Calu3 (cell line): ENCODE measurements at regions of chr20 and their contacts with region 1.

Region 1: GRCh38 chr20:36132802-36133211 is 21.7 kb upstream of the EPB41L1 start:
- DNase-seq: no peak
- H3K4me3 Mint-ChIP-seq: no peak overlapping the region
- H3K27ac Mint-ChIP-seq: no peak overlapping the region
- H3K4me1 Mint-ChIP-seq: peaks cover 51% of the 10 kb centered on the region
- H3K27me3 Mint-ChIP-seq: no peaks in the 10 kb centered on the region
- CTCF ChIP-seq: no peak

Region 2: GRCh38 chr20:36035745-36036144 is 97.1 kb before region 1 on chr20:
- CTCF ChIA-PET with region 1: no interaction called
- intact Hi-C with region 1: loop called (anchors 5 kb)
- DNase-seq: peak; percentile 26
- H3K4me3 Mint-ChIP-seq: no peak overlapping the region
- H3K27ac Mint-ChIP-seq: no peak overlapping the region
- H3K4me1 Mint-ChIP-seq: peaks cover 15% of the 10 kb centered on the region
- H3K27me3 Mint-ChIP-seq: no peaks in the 10 kb centered on the region
- CTCF ChIP-seq: no peak

Region 3: DNA sequence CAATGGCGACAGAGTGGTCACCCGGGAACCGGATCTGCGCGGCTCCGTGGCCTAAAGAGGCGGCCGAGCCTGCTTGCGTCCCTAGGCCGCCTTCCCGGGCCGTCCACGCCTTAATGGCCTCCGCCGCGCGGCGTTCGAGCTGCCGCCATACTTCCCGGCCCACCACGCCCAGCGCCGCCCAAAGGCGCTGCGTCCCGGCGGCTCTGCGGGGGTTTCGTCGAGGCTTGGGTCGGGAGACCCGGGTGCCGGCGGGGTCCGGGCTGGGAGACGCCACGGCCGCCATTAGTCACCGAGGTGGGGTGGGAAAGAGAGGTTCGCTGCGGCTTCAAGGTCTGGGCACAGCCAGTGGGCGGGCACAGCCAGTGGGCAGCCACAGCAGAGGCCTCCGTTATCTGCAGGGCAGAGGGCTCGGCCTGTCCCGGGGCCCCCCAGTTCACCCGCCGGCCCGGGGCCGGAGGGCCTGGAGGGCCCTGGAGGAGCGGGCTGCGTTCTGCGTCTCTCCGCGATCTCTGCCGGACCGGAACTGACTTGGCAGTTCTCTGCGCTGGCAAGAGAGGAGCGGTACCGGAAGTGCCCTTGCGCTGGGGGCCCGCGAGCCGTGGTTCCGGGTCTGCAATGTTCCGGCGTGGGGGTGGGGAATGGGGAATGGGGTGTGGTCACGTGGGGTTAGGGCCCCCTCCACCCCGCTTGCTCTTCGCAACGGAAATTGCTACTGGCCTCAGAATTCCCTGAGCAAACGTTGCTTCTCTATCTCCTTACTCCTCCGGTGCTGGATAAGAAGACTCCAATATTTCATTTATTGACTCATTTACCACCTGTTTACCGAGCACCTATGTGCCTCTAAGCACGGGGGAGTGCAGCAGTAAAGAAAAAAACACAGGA is 82.1 kb before region 1 on chr20:
- CTCF ChIA-PET with region 1: no interaction called
- intact Hi-C with region 1: loop called (anchors 1 kb)
- DNase-seq: peak; percentile 97
- H3K4me3 Mint-ChIP-seq: peak overlapping the region; percentile 74
- H3K27ac Mint-ChIP-seq: peak overlapping the region; percentile 69
- H3K4me1 Mint-ChIP-seq: peaks cover 41% of the 10 kb centered on the region
- H3K27me3 Mint-ChIP-seq: no peaks in the 10 kb centered on the region
- CTCF ChIP-seq: no peak

Region 4: DNA sequence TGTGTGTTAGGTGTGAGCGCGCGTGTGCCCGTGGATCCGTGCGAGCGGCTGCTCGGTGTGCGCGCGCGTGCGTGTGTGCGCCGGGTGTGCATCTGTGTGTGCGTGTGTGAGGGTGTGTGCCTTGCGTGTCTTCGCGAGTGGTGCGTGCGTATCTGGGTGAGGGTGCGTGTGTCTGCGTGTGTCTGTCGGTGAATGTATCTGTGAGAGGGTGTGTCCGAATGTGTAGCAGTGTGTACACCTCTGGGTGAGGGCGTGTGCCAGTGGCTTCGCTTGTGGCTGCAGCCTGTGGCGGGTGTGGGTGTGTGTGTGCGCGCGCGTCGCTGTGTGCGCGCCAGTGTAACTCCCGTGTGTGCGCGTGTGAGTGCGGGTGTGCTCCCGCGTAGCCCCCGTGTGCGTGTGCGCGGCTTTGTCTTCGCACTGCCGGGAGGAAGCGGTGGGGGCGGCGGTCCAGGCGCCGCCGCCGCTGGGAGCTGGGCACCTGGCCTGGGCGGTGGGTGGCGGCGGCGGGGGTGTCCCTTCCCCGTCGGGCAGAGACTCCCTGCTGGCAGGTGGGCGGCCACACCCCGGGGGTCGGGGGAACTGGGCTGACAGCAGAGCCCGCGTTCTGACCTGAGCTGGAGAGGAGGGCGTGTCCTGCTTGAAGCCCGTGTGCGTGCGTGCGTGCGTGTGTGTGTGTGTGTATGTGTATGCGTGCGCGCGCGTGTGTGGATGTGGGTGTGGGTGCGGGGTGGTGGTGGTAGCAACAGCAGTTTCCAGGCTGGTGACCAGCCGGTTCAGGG is 39.6 kb before region 1 on chr20:
- CTCF ChIA-PET with region 1: interaction called, 12 read pairs
- intact Hi-C with region 1: loop called (anchors 2 kb)
- DNase-seq: peak; percentile 84
- H3K4me3 Mint-ChIP-seq: peak overlapping the region; percentile 94
- H3K27ac Mint-ChIP-seq: peak overlapping the region; percentile 72
- H3K4me1 Mint-ChIP-seq: peaks cover 63% of the 10 kb centered on the region
- H3K27me3 Mint-ChIP-seq: no peaks in the 10 kb centered on the region
- CTCF ChIP-seq: no peak

Region 5: DNA sequence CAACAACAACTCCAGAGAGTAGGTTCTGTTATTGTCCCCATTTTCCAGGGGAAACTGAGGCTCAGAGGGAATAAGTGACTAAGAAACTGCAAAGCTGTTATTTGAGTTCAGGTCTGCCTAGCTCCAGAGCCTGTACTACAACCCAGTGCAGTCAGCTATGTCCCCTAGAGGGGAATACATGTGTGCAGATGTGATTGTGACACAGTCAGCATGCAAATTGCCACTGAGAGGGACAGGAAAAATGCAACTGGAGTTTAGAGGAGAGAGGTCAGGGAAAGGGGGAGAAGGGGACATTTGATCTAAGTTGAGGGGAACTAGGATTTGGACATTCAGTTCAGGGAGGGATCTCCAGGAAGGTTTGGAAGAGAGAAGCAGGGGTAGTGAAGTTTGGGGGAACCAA is 16.9 kb before region 1 on chr20:
- CTCF ChIA-PET with region 1: no interaction called
- intact Hi-C with region 1: no loop called
- DNase-seq: no peak
- H3K4me3 Mint-ChIP-seq: no peak overlapping the region
- H3K27ac Mint-ChIP-seq: no peak overlapping the region
- H3K4me1 Mint-ChIP-seq: peaks cover 48% of the 10 kb centered on the region
- H3K27me3 Mint-ChIP-seq: no peaks in the 10 kb centered on the region
- CTCF ChIP-seq: no peak